Heart left ventricle (tissue), 16 donors: ENCODE measurements at regions of chr12 and their contacts with region 1.

Region 1: DNA sequence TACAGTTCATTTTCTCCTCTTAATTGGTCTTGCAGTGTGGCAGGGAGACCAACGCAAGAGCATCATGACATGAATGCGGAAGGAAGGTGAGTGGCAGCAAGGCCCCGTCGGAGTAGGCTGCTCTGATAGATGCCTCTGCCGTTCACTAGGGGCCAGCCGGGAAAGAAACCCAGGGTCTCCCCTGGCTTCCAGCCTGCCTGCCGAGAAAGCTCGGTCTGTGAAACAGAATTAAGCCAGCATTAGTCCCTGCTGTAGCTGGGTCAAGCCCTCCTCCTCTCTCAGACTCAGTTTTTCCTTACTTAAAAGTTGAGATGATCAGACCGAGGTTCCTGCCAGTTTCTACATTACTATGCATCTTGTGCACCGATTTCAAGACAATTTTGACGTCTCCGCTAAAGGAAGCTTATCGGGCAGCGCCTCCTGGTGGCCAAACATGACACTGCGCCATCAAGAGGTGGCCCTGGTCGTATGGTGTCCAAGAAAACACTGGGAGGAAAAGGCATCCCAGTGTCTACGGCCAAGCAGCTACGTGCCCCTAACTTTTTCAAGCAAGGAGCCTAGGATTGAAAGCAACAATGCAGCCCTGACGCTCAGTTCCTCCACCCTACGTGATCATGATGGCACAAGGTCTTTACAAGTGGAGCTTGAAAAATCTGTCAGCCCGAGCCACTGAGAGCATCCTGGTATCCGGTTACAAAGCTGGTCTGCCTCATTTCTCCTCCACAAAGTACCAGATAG is 131.6 kb downstream of the KSR2 start:
- DNase-seq: peak; percentile 56 to 84 (median 66)
- ATAC-seq: peak in 3 of 4 donors; percentile 65 to 69 (median 66)
- H3K4me3 ChIP-seq: no peak overlapping the region
- H3K27ac ChIP-seq: no peak overlapping the region
- H3K4me1 ChIP-seq: peaks cover 0 to 6% (median 0%) of the 10 kb centered on the region in 12 donors
- H3K27me3 ChIP-seq: peaks cover 0 to 72% (median 9%) of the 10 kb centered on the region in 9 donors
- CTCF ChIP-seq: peak; percentile 90 to 96 (median 94)
- POLR2A ChIP-seq: no peak

Region 2: DNA sequence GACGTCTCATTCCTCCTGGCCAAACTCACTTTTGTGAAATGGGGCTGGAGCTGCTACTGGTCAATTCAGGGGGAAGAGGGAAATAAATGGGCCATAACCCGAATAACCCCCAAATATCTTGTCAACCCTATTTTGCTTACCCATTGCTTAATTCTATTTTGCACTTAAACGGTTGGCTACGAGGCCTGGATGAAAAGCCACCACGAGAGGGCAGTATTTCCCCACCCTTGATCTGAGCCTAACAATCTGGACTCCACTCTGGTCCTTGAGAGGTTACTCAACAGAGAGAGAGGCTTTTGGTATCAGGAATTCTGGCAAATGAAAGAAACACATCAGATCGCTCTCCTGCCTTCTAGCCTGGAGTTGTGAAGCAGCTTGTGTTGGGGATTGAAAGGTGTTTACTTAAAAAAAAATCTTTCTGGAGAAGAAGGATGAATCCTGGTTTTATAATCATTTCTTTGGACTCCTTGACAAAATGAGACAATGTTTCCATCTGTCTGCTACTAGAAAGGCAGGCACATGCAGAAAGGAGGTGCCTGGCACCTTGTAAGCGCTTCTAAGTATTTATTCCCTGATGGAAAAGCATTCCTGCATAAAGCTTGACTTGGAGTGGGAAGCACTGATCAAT is 624.5 kb before region 1 on chr12:
- intact Hi-C with region 1: loop called in 8 of 10 experiments (anchors 1 to 5 kb)
- DNase-seq: peak in 4 of 5 donors; percentile 46 to 65 (median 54)
- ATAC-seq: peak; percentile 61 to 84 (median 72)
- H3K4me3 ChIP-seq: no peak overlapping the region
- H3K27ac ChIP-seq: no peak overlapping the region
- H3K4me1 ChIP-seq: no peaks in the 10 kb centered on the region
- H3K27me3 ChIP-seq: peaks cover 0 to 25% (median 5%) of the 10 kb centered on the region in 9 donors
- CTCF ChIP-seq: peak in 11 of 12 donors; percentile 77 to 91 (median 85)
- POLR2A ChIP-seq: no peak

Region 3: DNA sequence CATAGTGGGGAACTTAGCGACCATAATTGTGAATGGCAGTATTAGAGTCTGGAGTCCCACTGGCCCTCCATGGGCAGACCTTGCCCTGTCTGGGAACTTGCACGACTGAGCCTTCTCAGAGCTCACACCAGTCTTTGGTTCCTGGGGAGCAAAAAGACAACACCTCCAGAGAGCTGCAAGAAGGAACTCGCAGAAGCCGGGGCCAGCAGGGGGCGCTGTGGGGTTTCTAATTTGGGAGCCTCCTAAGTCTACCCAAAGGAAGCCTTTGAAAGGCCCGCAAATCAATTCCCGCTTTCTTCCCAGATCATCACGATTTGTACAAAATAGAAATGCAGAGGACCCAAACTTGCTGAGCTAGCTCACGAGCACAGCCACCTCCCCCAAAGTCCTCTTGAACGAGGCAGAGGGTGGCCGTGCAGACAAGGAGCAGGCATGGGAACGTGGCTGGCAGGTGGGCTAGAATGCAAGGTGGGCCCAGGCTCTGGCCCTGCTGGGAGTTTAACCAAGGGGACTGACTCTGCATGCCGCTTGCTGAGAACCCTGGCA is 600.6 kb before region 1 on chr12:
- intact Hi-C with region 1: loop called in 7 of 10 experiments (anchors 1 to 5 kb)
- DNase-seq: peak; percentile 63 to 87 (median 69)
- ATAC-seq: peak in 3 of 4 donors; percentile 48 to 54 (median 50)
- H3K4me3 ChIP-seq: no peak overlapping the region
- H3K27ac ChIP-seq: no peak overlapping the region
- H3K4me1 ChIP-seq: no peaks in the 10 kb centered on the region
- H3K27me3 ChIP-seq: peaks cover 0 to 31% (median 0%) of the 10 kb centered on the region in 9 donors
- CTCF ChIP-seq: peak; percentile 55 to 85 (median 72)
- POLR2A ChIP-seq: no peak

Region 4: GRCh38 chr12:117367011-117367638 is 470.0 kb before region 1 on chr12:
- intact Hi-C with region 1: loop called (anchors 1 to 5 kb)
- DNase-seq: peak in 4 of 5 donors; percentile 42 to 60 (median 46)
- ATAC-seq: peak in 3 of 4 donors; percentile 59 to 67 (median 62)
- H3K4me3 ChIP-seq: no peak overlapping the region
- H3K27ac ChIP-seq: no peak overlapping the region
- H3K4me1 ChIP-seq: no peaks in the 10 kb centered on the region
- H3K27me3 ChIP-seq: peaks cover 0 to 45% (median 17%) of the 10 kb centered on the region in 9 donors
- CTCF ChIP-seq: peak; percentile 72 to 87 (median 82)
- POLR2A ChIP-seq: no peak

Region 5: DNA sequence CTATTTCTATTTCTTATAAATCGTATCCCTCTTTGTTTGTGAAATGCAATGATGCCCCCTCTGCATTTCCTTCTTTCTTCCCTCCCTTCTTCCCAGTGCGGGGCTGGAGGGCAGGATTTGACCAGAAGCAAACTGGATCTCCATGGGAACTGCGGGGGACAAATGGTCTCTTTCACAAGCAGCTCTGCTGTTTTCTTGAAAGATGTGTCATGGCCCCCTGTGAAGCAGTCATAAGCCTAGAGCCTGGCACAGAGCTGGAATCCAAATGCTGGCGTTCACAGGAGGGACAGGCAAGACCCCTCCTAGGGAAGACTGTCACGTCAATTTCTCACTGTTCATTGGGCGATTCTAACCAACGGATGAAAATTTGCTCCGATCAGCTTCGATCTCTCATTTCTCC is 272.3 kb before region 1 on chr12:
- intact Hi-C with region 1: no loop called
- DNase-seq: no peak
- ATAC-seq: no peak
- H3K4me3 ChIP-seq: no peak overlapping the region
- H3K27ac ChIP-seq: no peak overlapping the region
- H3K4me1 ChIP-seq: no peaks in the 10 kb centered on the region
- H3K27me3 ChIP-seq: peaks cover 0 to 42% (median 0%) of the 10 kb centered on the region in 9 donors
- CTCF ChIP-seq: no peak
- POLR2A ChIP-seq: no peak

Region 6: GRCh38 chr12:117587631-117588287 is 249.4 kb before region 1 on chr12:
- intact Hi-C with region 1: loop called in 6 of 10 experiments (anchors 2 to 10 kb)
- DNase-seq: peak in 4 of 5 donors; percentile 19 to 53 (median 34)
- ATAC-seq: peak in 3 of 4 donors; percentile 50 to 67 (median 65)
- H3K4me3 ChIP-seq: no peak overlapping the region
- H3K27ac ChIP-seq: no peak overlapping the region
- H3K4me1 ChIP-seq: no peaks in the 10 kb centered on the region
- H3K27me3 ChIP-seq: peaks cover 0 to 43% (median 14%) of the 10 kb centered on the region in 9 donors
- CTCF ChIP-seq: peak; percentile 64 to 85 (median 80)
- POLR2A ChIP-seq: no peak

Region 7: DNA sequence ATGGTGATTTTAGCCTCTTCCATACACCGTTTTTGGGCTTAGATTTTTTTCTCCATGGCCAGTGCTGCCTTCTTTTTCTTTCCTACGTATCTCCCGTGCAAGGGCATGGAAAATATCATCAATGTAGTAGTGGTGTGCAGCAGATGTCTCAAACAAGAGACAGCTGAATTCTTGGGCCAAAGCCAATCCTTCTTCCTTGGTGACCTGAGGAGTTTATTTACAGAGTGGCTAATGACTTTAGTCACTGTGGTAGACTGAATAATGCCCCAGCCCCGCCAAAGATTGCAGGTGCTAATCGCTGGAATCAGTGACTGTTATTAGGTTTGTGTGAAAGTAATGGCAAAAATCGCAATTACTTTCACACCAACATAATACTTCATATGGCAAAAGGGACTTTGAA is 240.2 kb before region 1 on chr12:
- intact Hi-C with region 1: loop called in 1 of 10 experiments (anchors 10 kb)
- DNase-seq: no peak
- ATAC-seq: no peak
- H3K4me3 ChIP-seq: no peak overlapping the region
- H3K27ac ChIP-seq: no peak overlapping the region
- H3K4me1 ChIP-seq: no peaks in the 10 kb centered on the region
- H3K27me3 ChIP-seq: peaks cover 0 to 29% (median 0%) of the 10 kb centered on the region in 9 donors
- CTCF ChIP-seq: no peak
- POLR2A ChIP-seq: no peak

Region 8: GRCh38 chr12:117671734-117672133 is 165.4 kb before region 1 on chr12:
- intact Hi-C with region 1: loop called in 1 of 10 experiments (anchors 10 kb)
- DNase-seq: no peak
- ATAC-seq: no peak
- H3K4me3 ChIP-seq: no peak overlapping the region
- H3K27ac ChIP-seq: no peak overlapping the region
- H3K4me1 ChIP-seq: no peaks in the 10 kb centered on the region
- H3K27me3 ChIP-seq: peaks cover 0 to 32% (median 4%) of the 10 kb centered on the region in 9 donors
- CTCF ChIP-seq: peak in 10 of 12 donors; percentile 16 to 46 (median 31)
- POLR2A ChIP-seq: no peak

Region 9: GRCh38 chr12:117980607-117981006 is 143.4 kb after region 1 on chr12:
- intact Hi-C with region 1: no loop called
- DNase-seq: no peak
- ATAC-seq: no peak
- H3K4me3 ChIP-seq: no peak overlapping the region
- H3K27ac ChIP-seq: no peak overlapping the region
- H3K4me1 ChIP-seq: no peaks in the 10 kb centered on the region
- H3K27me3 ChIP-seq: peaks cover 0 to 17% (median 3%) of the 10 kb centered on the region in 9 donors
- CTCF ChIP-seq: no peak
- POLR2A ChIP-seq: no peak

Region 10: GRCh38 chr12:118055144-118055557 is 218.0 kb after region 1 on chr12:
- intact Hi-C with region 1: no loop called
- DNase-seq: no peak
- ATAC-seq: no peak
- H3K4me3 ChIP-seq: no peak overlapping the region
- H3K27ac ChIP-seq: peak overlapping the region in 11 of 12 donors; percentile 0 to 73 (median 50)
- H3K4me1 ChIP-seq: peaks cover 10 to 82% (median 67%) of the 10 kb centered on the region in 12 donors
- H3K27me3 ChIP-seq: no peaks in the 10 kb centered on the region
- CTCF ChIP-seq: peak; percentile 36 to 71 (median 53)
- POLR2A ChIP-seq: no peak